Activated naive CD4-positive, alpha-beta T cell treated with anti-CD3 and anti-CD28 coated beads for 36 hours (primary cell): ENCODE measurements at regions of chr21 and their contacts with region 1.

Region 1: GRCh38 chr21:41921021-41921420 is 32.8 kb downstream of the C2CD2 start:
- DNase-seq: no peak
- H3K4me3 Mint-ChIP-seq: no peak overlapping the region
- H3K27ac Mint-ChIP-seq: no peak overlapping the region
- H3K4me1 Mint-ChIP-seq: peaks cover 47% of the 10 kb centered on the region
- H3K27me3 Mint-ChIP-seq: no peaks in the 10 kb centered on the region

Region 2: GRCh38 chr21:41816220-41817165 is 104.5 kb before region 1 on chr21:
- CTCF ChIA-PET with region 1: interaction called, 3 read pairs
- intact Hi-C with region 1: loop called (anchors 1 kb)
- DNase-seq: peak; percentile 68
- H3K4me3 Mint-ChIP-seq: no peak overlapping the region
- H3K27ac Mint-ChIP-seq: no peak overlapping the region
- H3K4me1 Mint-ChIP-seq: peaks cover 10% of the 10 kb centered on the region
- H3K27me3 Mint-ChIP-seq: no peaks in the 10 kb centered on the region

Region 3: GRCh38 chr21:41901099-41901498 is 19.9 kb before region 1 on chr21:
- CTCF ChIA-PET with region 1: interaction called, 6 read pairs
- intact Hi-C with region 1: loop called (anchors 1 kb)
- DNase-seq: peak; percentile 78
- H3K4me3 Mint-ChIP-seq: no peak overlapping the region
- H3K27ac Mint-ChIP-seq: peak overlapping the region; percentile 75
- H3K4me1 Mint-ChIP-seq: peaks cover 26% of the 10 kb centered on the region
- H3K27me3 Mint-ChIP-seq: no peaks in the 10 kb centered on the region

Region 4: GRCh38 chr21:42199488-42200458 is 278.8 kb after region 1 on chr21:
- CTCF ChIA-PET with region 1: no interaction called
- intact Hi-C with region 1: no loop called
- DNase-seq: peak; percentile 43
- H3K4me3 Mint-ChIP-seq: no peak overlapping the region
- H3K27ac Mint-ChIP-seq: peak overlapping the region; percentile 79
- H3K4me1 Mint-ChIP-seq: peaks cover 49% of the 10 kb centered on the region
- H3K27me3 Mint-ChIP-seq: no peaks in the 10 kb centered on the region